ENCODE measurements at regions of chr13 and their contacts with region 1.

Region 1: DNA sequence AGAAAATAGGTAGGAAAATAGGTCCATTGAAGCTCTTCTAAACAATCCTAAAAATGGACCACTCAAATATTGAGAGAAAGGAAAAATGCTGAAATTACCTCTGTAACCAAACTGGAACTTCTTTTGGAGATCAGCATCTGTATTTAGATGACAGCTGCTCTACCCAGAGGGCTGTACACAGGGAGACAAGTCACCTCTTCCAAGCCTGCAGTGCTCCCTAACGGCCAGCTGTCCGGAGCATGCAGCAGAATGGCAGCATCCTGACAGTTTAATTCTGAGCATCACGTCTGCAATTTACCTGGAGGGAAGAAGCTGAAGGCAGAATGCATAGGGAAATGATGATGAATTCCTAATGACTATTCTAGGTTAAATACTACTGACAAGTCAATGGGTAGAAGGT is 62.8 kb upstream of the DIAPH3 start:
- DNase-seq: peak; percentile 33
- H3K4me3 Mint-ChIP-seq: no peak overlapping the region
- H3K27ac Mint-ChIP-seq: no peak overlapping the region
- H3K4me1 Mint-ChIP-seq: no peaks in the 10 kb centered on the region
- H3K27me3 Mint-ChIP-seq: peaks cover 24% of the 10 kb centered on the region
- CTCF ChIP-seq: peak; percentile 47

Region 2: DNA sequence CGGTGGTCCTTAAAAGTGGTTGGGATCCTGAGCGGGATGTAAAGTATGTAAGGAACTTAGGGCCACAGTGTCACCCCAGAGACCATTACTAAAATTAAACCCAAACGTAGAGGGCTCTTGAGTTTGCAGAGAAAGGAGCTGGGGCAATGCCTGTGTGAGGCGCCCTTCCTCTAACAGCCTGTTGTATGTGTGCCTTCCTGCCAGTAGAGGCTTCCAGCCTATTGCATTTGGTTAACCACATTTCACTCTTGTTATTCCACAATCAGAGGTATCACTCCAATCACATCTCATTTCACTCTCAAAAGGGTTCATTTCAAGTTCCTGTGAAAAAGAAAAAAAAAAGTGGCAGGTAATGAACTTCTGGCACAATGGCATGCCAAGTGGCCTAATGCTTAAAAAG is 92.1 kb before region 1 on chr13:
- CTCF ChIA-PET with region 1: no interaction called
- POLR2A ChIA-PET with region 1: no interaction called
- intact Hi-C with region 1: no loop called
- DNase-seq: no peak
- H3K4me3 Mint-ChIP-seq: no peak overlapping the region
- H3K27ac Mint-ChIP-seq: no peak overlapping the region
- H3K4me1 Mint-ChIP-seq: peaks cover 7% of the 10 kb centered on the region
- H3K27me3 Mint-ChIP-seq: no peaks in the 10 kb centered on the region
- CTCF ChIP-seq: no peak

Region 3: GRCh38 chr13:60311527-60311926 is 85.0 kb after region 1 on chr13:
- CTCF ChIA-PET with region 1: no interaction called
- POLR2A ChIA-PET with region 1: no interaction called
- intact Hi-C with region 1: loop called (anchors 10 kb)
- DNase-seq: no peak
- H3K4me3 Mint-ChIP-seq: no peak overlapping the region
- H3K27ac Mint-ChIP-seq: no peak overlapping the region
- H3K4me1 Mint-ChIP-seq: peaks cover 7% of the 10 kb centered on the region
- H3K27me3 Mint-ChIP-seq: no peaks in the 10 kb centered on the region
- CTCF ChIP-seq: no peak

Measured in MCF 10A (cell line).